ENCODE measurements at regions of chr6 and their contacts with region 1.

Region 1: GRCh38 chr6:154733012-154733625 is at the start of gene SCAF8:
- DNase-seq: peak; percentile 81 to 91 (median 88)
- ATAC-seq: peak; percentile 66 to 91 (median 82)
- H3K4me3 ChIP-seq: peak within 1 kb of the TSS; percentile 75 to 100 (median 98)
- H3K27ac ChIP-seq: peak within 1 kb of the TSS; percentile 97 to 100 (median 100)
- H3K4me1 ChIP-seq: peaks cover 17 to 50% (median 44%) of the 10 kb centered on the region in 12 donors
- H3K27me3 ChIP-seq: no peaks in the 10 kb centered on the region
- CTCF ChIP-seq: peak; percentile 61 to 98 (median 86)
- POLR2A ChIP-seq: peak in 1 of 2 donors; percentile 24
- total RNA-seq, gene SCAF8: 42.9 to 83.5 (median 64.6) TPM

Region 2: GRCh38 chr6:154675602-154676088 is 57.5 kb before region 1 on chr6:
- intact Hi-C with region 1: loop called in 4 of 10 experiments (anchors 2 to 5 kb)
- DNase-seq: peak; percentile 74 to 87 (median 83)
- ATAC-seq: peak; percentile 94 to 99 (median 98)
- H3K4me3 ChIP-seq: no peak overlapping the region
- H3K27ac ChIP-seq: no peak overlapping the region
- H3K4me1 ChIP-seq: no peaks in the 10 kb centered on the region
- H3K27me3 ChIP-seq: no peaks in the 10 kb centered on the region
- CTCF ChIP-seq: peak; percentile 95 to 100 (median 100)
- POLR2A ChIP-seq: no peak

Region 3: GRCh38 chr6:154683756-154684523 is 49.2 kb before region 1 on chr6:
- intact Hi-C with region 1: loop called in 3 of 10 experiments (anchors 5 kb)
- DNase-seq: no peak
- ATAC-seq: no peak
- H3K4me3 ChIP-seq: no peak overlapping the region
- H3K27ac ChIP-seq: peak overlapping the region in 1 of 12 donors; percentile 70
- H3K4me1 ChIP-seq: peaks cover 0 to 13% (median 0%) of the 10 kb centered on the region in 12 donors
- H3K27me3 ChIP-seq: no peaks in the 10 kb centered on the region
- CTCF ChIP-seq: no peak
- POLR2A ChIP-seq: no peak

Region 4: GRCh38 chr6:154767003-154767723 is 34.0 kb after region 1 on chr6:
- intact Hi-C with region 1: loop called in 1 of 10 experiments (anchors 5 kb)
- DNase-seq: no peak
- ATAC-seq: peak in 3 of 4 donors; percentile 4 to 47 (median 20)
- H3K4me3 ChIP-seq: no peak overlapping the region
- H3K27ac ChIP-seq: peak overlapping the region in 4 of 12 donors; percentile 12 to 56 (median 30)
- H3K4me1 ChIP-seq: peaks cover 0 to 86% (median 58%) of the 10 kb centered on the region in 12 donors
- H3K27me3 ChIP-seq: no peaks in the 10 kb centered on the region
- CTCF ChIP-seq: no peak
- POLR2A ChIP-seq: no peak

Region 5: DNA sequence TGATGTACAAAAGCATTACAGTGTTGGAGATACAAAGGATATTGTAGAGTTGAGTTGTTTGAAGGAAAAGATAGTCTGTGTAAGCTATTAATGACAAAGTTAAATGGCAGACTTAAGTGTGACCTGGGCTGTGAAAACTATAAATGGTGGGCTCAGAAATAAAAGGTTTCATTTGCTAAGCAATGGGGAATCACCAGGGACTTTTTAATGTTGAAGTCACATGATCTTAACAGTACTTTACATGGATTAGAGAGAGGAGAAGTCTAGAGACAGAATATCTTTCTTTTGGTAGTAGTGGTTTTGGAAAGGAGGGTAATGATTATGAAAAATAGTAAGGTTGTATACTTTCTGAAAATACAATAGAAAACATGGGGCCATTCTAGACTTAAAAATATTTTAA is 67.2 kb after region 1 on chr6:
- intact Hi-C with region 1: loop called in 9 of 10 experiments (anchors 2 to 5 kb)
- DNase-seq: no peak
- ATAC-seq: no peak
- H3K4me3 ChIP-seq: no peak overlapping the region
- H3K27ac ChIP-seq: no peak overlapping the region
- H3K4me1 ChIP-seq: peaks cover 0 to 12% (median 0%) of the 10 kb centered on the region in 12 donors
- H3K27me3 ChIP-seq: no peaks in the 10 kb centered on the region
- CTCF ChIP-seq: no peak
- POLR2A ChIP-seq: no peak

Region 6: GRCh38 chr6:154805288-154805911 is 72.3 kb after region 1 on chr6:
- intact Hi-C with region 1: loop called (anchors 2 to 5 kb)
- DNase-seq: no peak
- ATAC-seq: peak in 1 of 4 donors; percentile 53
- H3K4me3 ChIP-seq: no peak overlapping the region
- H3K27ac ChIP-seq: no peak overlapping the region
- H3K4me1 ChIP-seq: peaks cover 0 to 7% (median 0%) of the 10 kb centered on the region in 12 donors
- H3K27me3 ChIP-seq: no peaks in the 10 kb centered on the region
- CTCF ChIP-seq: peak; percentile 31 to 69 (median 57)
- POLR2A ChIP-seq: no peak

Measured in heart left ventricle (tissue), 16 donors.